Endothelial cell of umbilical vein (primary cell): ENCODE measurements at regions of chr3 and their contacts with region 1.

Region 1: DNA sequence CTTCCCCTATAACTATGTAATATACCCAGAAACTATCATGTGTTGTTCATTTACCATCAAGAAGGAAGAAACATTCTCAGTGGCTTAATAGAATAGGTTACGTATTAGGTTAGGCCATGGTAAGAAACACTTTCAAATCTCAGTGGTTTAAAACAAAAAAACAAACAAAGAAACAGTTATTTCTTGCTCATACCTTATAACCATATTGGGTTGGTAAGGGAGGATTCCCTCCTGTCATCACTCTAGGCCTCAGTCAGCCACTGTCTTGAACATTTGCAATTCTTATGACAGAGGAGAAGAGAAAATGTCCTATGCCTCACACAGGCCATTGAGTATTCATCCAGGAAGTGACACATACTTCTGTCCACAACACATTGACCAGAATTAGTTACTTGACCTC is 727.7 kb upstream of the NECTIN3 start:
- DNase-seq: peak; percentile 9
- H3K4me3 ChIP-seq: no peak overlapping the region
- H3K27ac ChIP-seq: peak overlapping the region; percentile 0
- H3K4me1 ChIP-seq: peaks cover 21% of the 10 kb centered on the region
- H3K27me3 ChIP-seq: no peaks in the 10 kb centered on the region
- CTCF ChIP-seq: no peak
- POLR2A ChIP-seq: no peak

Region 2: GRCh38 chr3:110420158-110420641 is 76.3 kb after region 1 on chr3:
- CTCF ChIA-PET with region 1: no interaction called
- POLR2A ChIA-PET with region 1: no interaction called
- dilution Hi-C with region 1: no loop called
- intact Hi-C with region 1: loop called (anchors 2 kb)
- DNase-seq: peak; percentile 94
- H3K4me3 ChIP-seq: peak overlapping the region in 1 of 3 experiments; percentile 5
- H3K27ac ChIP-seq: peak overlapping the region; percentile 92
- H3K4me1 ChIP-seq: peaks cover 32% of the 10 kb centered on the region
- H3K27me3 ChIP-seq: no peaks in the 10 kb centered on the region
- CTCF ChIP-seq: no peak
- POLR2A ChIP-seq: no peak